ENCODE measurements at regions of chr17 and their contacts with region 1.

Region 1: DNA sequence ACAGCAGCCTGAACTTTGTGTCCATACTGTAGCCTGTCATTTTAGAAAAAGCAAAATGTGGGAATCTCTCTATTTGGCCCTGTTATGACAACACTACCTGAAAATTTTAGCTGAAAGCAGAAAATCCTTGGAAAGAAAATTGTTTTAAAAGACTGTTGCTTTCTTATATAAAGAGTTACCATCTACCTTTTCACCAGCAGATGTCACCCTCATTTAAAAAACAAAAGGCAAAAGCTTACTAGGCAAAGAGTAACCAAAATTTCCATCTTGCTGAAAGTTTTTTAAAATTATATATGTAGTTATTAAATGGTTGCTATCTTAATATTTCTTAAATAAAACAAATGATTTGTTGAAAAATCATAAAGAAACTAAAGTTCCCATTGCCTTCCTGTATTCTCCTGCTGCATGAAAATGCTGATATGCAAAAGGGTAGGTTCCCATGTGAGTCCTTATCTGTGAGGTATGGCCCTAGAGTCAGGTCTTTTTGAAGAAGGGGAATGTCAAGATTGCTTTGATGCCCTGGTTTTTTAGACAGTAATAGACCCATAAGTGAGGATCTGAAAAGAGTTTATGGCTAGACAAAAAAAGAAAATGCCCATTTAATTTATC is 61.0 kb downstream of the TNRC6C start:
- DNase-seq: peak; percentile 56
- H3K4me3 ChIP-seq: no peak overlapping the region
- H3K27ac ChIP-seq: no peak overlapping the region
- H3K4me1 ChIP-seq: no peaks in the 10 kb centered on the region
- H3K27me3 ChIP-seq: no peaks in the 10 kb centered on the region
- CTCF ChIP-seq: peak; percentile 19 to 28
- POLR2A ChIP-seq: no peak

Region 2: GRCh38 chr17:77963441-77963840 is 56.0 kb before region 1 on chr17:
- CTCF ChIA-PET with region 1: interaction called, 37 read pairs
- POLR2A ChIA-PET with region 1: interaction called, 25 read pairs
- dilution Hi-C with region 1: no loop called
- intact Hi-C with region 1: loop called (anchors 1 kb)
- DNase-seq: peak; percentile 39
- H3K4me3 ChIP-seq: no peak overlapping the region
- H3K27ac ChIP-seq: no peak overlapping the region
- H3K4me1 ChIP-seq: peaks cover 14% of the 10 kb centered on the region
- H3K27me3 ChIP-seq: no peaks in the 10 kb centered on the region
- CTCF ChIP-seq: no peak
- POLR2A ChIP-seq: no peak

Region 3: GRCh38 chr17:78032166-78032565 is 12.7 kb after region 1 on chr17:
- CTCF ChIA-PET with region 1: interaction called, 34 read pairs
- POLR2A ChIA-PET with region 1: no interaction called
- dilution Hi-C with region 1: no loop called
- intact Hi-C with region 1: no loop called
- DNase-seq: no peak
- H3K4me3 ChIP-seq: no peak overlapping the region
- H3K27ac ChIP-seq: no peak overlapping the region
- H3K4me1 ChIP-seq: peaks cover 12% of the 10 kb centered on the region
- H3K27me3 ChIP-seq: no peaks in the 10 kb centered on the region
- CTCF ChIP-seq: no peak
- POLR2A ChIP-seq: no peak

Region 4: DNA sequence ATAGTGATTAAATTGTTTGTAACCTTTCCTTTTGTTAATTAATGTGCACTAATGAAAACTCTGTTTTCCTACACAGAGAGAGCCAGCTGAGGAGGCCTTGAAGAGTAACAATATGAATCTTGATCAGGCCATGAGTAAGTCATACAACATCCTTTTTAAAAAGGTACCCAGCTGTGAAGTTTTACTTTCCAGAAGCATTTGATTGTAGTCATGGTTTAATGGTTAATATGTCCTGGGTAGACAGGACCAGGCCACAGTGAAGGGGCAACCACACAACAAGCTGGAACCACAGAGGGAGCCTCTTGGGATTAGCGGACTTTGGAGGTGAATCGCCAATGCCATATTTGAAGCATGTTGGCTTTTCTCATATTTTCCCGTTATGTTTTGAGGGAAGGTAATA is 53.5 kb after region 1 on chr17:
- CTCF ChIA-PET with region 1: interaction called, 14 read pairs
- POLR2A ChIA-PET with region 1: no interaction called
- dilution Hi-C with region 1: no loop called
- intact Hi-C with region 1: no loop called
- DNase-seq: no peak
- H3K4me3 ChIP-seq: no peak overlapping the region
- H3K27ac ChIP-seq: no peak overlapping the region
- H3K4me1 ChIP-seq: no peaks in the 10 kb centered on the region
- H3K27me3 ChIP-seq: no peaks in the 10 kb centered on the region
- CTCF ChIP-seq: no peak
- POLR2A ChIP-seq: no peak

Region 5: DNA sequence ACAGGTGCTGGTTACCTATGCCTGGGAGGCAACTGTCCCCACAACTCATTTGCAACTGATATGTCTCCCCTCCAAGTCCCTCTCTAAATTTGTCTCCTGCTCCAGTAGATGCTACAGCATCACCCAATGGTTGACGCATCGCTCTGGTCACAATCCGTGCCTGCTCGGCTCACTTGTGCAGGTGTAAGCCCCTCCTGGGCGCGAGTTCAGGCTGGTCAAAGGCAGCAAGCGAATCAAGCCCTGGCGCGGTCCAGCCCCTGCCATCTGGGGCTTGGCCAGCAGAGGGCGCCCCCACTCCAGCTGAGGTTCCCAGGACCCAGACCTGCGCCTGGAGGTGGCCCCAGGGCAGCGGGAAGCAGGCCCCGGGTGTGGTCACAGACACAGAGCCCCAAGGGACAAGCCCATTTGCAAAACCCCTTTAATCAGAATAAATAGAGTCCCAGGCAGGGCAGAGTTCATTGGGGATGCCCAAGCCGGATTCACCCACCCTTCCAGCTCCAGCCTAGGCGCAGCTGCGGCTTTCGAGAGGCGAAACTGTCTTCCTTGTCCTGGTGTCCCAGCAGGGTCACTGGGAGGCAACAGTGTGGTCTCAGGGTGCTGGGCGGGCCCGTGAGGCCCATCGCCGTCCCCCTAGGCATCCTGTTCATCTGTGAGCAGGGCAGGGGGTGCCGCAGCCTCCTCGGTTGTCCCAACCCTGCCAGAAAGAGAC is 93.2 kb after region 1 on chr17:
- CTCF ChIA-PET with region 1: interaction called, 14 read pairs
- POLR2A ChIA-PET with region 1: no interaction called
- dilution Hi-C with region 1: no loop called
- intact Hi-C with region 1: no loop called
- DNase-seq: peak; percentile 51
- H3K4me3 ChIP-seq: no peak overlapping the region
- H3K27ac ChIP-seq: no peak overlapping the region
- H3K4me1 ChIP-seq: no peaks in the 10 kb centered on the region
- H3K27me3 ChIP-seq: no peaks in the 10 kb centered on the region
- CTCF ChIP-seq: peak; percentile 98 to 99
- POLR2A ChIP-seq: no peak

Region 6: DNA sequence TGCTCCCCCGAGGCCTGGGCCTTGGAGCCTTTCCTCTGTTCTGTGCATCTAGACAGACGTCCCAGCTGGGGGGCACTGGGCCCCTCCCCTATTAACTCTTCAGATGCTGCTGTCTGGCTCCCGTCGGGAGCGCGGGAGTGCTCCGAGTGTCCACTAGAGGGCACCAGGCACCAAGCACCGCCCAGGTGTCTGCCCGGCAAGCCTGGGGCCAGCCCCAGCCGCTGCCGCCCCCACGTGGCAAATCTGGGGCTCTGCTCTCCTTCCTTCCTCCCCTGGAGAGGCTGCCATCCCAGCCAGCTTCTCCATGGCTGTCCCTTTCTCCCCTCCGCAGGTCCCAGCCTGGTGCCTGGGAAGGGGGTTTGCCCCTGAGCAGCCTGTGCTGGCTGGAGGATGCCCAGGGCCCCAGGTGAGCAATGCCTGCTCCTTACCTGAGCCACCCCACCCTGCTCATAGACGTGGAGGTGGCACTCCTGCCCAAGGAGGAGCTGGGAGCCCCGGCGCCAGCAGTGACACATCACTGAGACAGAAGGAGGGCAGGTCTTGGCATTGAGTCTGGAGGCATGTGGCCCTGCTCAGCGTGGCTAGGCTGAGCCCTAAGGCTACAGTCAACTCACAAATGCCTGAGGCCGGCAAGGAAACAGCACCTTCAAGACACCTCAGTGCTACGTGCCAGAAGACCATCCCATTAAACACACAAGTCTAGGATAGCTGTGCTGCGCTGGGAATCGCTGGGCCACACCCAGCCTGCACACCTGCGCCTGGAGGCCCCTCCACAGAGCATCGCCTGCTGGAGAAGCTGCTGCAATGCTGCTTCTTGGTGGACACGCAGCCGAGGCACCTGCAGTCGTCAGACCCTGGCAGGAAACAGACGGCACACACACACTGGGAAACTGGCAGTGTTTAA is 231.7 kb after region 1 on chr17:
- CTCF ChIA-PET with region 1: interaction called, 20 read pairs
- POLR2A ChIA-PET with region 1: no interaction called
- dilution Hi-C with region 1: no loop called
- intact Hi-C with region 1: loop called (anchors 1 kb)
- DNase-seq: peak; percentile 78
- H3K4me3 ChIP-seq: no peak overlapping the region
- H3K27ac ChIP-seq: no peak overlapping the region
- H3K4me1 ChIP-seq: peaks cover 4% of the 10 kb centered on the region
- H3K27me3 ChIP-seq: no peaks in the 10 kb centered on the region
- CTCF ChIP-seq: peak; percentile 99 to 100
- POLR2A ChIP-seq: no peak